ENCODE measurements at regions of chr7 and their contacts with region 1.

Region 1: DNA sequence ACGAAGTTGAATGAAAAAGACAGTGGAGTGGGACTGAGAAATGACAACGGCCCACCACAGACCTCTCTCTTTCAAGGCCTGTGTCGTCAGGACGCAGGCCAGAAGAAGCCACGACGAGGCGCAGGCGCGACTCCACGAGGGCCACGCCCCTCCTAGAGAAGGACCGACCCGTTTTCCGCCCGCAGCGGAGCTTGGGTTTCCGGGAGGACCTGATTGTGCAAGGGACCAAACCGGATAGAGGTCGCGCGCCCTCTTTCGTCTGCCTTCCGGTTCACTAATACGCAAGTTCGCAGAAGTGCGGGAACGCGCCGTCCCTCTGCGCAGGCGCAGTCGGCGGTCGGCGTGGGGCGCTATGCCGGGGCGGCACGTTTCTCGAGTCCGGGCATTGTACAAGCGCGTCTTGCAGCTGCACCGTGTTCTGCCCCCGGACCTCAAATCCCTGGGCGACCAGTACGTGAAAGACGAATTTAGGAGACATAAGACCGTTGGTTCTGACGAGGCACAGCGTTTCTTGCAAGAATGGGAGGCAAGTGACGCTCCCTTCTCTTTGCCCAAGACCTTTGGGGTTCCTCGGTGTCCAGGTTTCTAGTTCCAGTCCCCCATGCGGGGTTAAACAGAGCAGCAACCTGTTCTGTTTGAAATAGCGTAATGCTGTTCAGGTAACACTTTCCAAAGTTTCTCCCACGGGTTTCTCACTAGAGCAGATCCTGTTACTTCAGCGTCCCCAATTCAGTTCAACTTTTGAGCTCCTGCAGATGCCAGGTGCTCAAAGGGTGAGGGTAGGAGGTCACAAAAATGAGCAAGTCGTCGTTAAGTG is at the start of gene SDHAF3:
- DNase-seq: peak; percentile 95
- H3K4me3 ChIP-seq: peak within 1 kb of the TSS; percentile 60 to 87 (median 76)
- H3K27ac ChIP-seq: peak within 1 kb of the TSS; percentile 52
- H3K4me1 ChIP-seq: no peaks in the 10 kb centered on the region
- H3K27me3 ChIP-seq: no peaks in the 10 kb centered on the region
- CTCF ChIP-seq: no peak
- total RNA-seq, gene SDHAF3: 10.0 to 21.6 TPM

Region 2: DNA sequence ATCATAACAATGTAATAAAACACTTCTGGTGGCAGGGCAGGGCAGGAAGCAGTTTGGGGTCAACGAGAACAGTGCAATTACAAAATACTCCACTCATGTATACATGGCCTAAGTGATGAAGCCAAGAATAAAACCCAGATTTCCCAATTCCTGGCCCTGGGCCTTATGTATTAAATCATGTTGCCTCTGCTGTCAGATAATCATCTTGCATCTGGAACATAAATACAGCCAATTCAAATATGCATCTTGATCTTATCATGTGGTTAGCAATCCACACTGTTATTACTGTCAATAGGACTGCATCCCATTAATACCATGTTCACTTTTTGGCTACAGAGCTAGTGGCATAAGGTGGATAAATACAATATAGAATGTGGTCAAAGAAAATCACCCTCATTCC is 609.2 kb before region 1 on chr7:
- CTCF ChIA-PET with region 1: no interaction called
- dilution Hi-C with region 1: no loop called
- in situ Hi-C with region 1: no loop called
- intact Hi-C with region 1: no loop called
- DNase-seq: peak; percentile 70
- H3K4me3 ChIP-seq: no peak overlapping the region
- H3K27ac ChIP-seq: no peak overlapping the region
- H3K4me1 ChIP-seq: no peaks in the 10 kb centered on the region
- H3K27me3 ChIP-seq: peaks cover 4% of the 10 kb centered on the region
- CTCF ChIP-seq: no peak

Region 3: DNA sequence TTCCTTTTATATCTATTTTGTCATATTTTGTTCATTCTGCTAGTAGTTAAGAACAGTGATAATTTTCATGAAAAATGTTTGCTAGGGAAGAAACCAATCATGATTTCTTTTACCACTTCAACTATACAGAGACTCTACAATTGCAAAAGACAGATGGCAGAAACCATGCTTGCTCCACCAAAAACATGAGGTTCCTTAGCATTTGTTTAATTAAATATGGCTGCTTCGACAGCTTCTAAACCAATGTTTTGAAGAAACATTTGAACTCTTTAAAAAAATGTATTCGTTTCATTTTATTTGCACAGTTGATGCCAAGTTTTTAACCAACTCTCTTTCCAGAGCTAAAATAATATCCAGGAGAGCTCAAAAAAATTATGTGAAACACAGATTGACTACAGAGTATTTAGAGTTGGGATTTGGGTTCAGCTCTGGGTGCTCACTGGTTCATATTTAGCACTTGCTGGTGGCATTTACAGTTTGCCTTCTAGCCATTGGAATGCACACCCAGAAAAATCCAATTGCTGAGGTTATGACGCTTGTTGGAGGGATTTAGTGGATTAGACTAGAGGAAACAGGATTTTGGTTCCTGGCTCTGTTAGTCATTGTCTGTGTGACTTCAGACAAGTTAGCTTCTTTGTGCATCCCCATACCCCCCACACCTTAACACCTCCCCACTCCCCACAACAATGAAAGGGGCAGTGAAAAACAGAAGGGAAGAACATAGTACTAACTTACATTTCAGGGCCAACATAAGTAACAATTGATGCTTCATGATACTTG is 35.9 kb before region 1 on chr7:
- CTCF ChIA-PET with region 1: no interaction called
- dilution Hi-C with region 1: no loop called
- in situ Hi-C with region 1: no loop called
- intact Hi-C with region 1: no loop called
- DNase-seq: no peak
- H3K4me3 ChIP-seq: no peak overlapping the region
- H3K27ac ChIP-seq: no peak overlapping the region
- H3K4me1 ChIP-seq: no peaks in the 10 kb centered on the region
- H3K27me3 ChIP-seq: no peaks in the 10 kb centered on the region
- CTCF ChIP-seq: no peak

Region 4: DNA sequence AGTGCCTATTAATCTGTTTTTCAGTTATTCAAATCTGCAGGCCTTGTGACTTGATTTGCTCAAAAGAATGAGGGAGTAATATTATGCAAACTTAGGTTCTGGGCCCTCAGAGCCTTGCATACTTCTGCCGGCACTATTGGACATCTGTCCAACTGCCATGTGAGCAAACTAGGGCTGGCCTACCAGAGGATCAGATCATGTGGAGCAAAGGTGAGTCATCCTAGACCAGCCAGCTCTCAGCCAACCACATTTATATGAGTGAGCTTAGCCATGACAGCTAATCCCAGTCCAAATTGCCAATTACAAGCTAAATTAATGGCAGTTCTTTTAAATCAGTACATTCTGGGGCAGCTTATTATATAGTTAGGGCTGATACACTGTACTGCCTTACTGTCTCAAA is 69.5 kb after region 1 on chr7:
- CTCF ChIA-PET with region 1: no interaction called
- dilution Hi-C with region 1: no loop called
- in situ Hi-C with region 1: no loop called
- intact Hi-C with region 1: no loop called
- DNase-seq: peak; percentile 42
- H3K4me3 ChIP-seq: no peak overlapping the region
- H3K27ac ChIP-seq: no peak overlapping the region
- H3K4me1 ChIP-seq: no peaks in the 10 kb centered on the region
- H3K27me3 ChIP-seq: no peaks in the 10 kb centered on the region
- CTCF ChIP-seq: no peak

Region 5: DNA sequence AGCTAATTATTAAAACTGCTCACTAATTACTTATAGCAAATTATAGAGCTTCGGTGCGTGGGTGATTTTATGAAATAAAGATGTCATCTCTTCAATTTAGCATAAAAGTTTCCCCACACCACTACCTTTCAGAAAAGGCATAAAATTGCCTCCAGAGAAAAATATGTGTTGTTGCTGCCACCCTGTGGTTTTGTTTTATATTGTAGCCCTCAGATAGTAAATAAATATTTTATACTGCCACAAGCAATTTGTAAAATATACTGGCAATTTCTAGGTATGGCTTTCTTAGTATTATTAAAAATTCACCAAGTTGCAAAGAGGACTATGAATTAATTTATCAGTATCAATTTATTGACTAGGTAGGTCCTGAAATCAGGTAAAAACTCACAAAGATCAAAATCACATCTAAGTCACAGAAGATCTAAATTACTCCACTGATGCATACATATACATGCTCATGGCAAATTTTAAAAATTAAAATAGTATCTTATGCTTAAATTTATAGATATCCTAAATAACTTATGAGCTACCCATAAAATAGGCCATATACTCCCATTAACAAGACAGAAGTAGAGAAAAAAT is 728.1 kb after region 1 on chr7:
- CTCF ChIA-PET with region 1: no interaction called
- dilution Hi-C with region 1: no loop called
- in situ Hi-C with region 1: loop called in 1 of 2 experiments (anchors 10 kb)
- intact Hi-C with region 1: no loop called
- DNase-seq: no peak
- H3K4me3 ChIP-seq: no peak overlapping the region
- H3K27ac ChIP-seq: no peak overlapping the region
- H3K4me1 ChIP-seq: no peaks in the 10 kb centered on the region
- H3K27me3 ChIP-seq: no peaks in the 10 kb centered on the region
- CTCF ChIP-seq: peak; percentile 25 to 44